H1 (cell line): ENCODE measurements at regions of chr15 and their contacts with region 1.

Region 1: DNA sequence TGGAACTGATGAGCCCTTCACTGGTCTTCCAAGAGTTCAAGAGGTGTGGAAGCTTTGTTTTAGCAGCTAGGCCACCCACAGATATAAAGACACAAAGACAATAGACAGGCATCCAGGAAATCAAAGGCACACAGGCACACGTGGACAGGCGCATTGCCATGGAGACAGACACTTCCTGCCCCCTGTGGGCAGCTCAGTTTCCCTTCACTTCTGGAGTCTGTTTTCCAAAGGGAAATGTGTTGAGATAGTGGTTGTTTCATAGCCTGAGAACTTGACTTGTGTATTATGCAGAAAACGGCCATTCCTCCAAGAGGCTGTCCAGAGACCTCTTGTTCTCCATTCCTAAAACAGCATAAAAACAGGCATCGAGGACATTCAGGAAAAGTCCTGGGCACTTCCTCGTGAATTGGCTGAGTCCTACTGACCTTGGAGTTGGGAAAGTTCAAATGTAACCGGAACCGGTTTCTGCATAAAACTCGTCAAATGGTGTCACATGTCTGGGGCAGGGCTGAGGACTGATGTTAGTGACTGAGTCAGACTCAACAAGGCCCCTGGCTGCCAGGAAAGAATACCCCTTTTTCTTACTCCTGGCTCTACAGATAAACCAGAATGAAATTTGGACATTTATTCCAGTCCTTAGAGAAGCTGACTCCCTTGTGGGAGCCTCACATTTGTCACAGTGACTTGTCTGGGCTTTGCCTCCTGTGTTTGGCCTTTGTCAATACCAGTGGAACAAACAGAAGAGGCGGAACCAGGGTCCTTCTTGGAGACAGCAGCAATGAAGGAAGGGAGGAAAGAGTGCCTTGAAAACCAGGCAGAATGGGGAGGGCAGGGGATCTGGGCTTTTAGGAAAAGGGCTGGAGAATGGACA is 1.3 kb downstream of the ALPK3 start:
- DNase-seq: no peak
- H3K4me3 ChIP-seq: peak overlapping the region in 3 of 4 experiments; percentile 18 to 53 (median 36); a peak in 2 of 8 replicates
- H3K27ac ChIP-seq: no peak overlapping the region
- H3K4me1 ChIP-seq: peaks cover 9 to 25% (median 18%) of the 10 kb centered on the region in 4 experiments
- H3K27me3 ChIP-seq: peaks cover 0 to 3% (median 0%) of the 10 kb centered on the region in 4 experiments; a peak in 2 of 7 replicates
- CTCF ChIP-seq: peak in 2 of 3 experiments; percentile 2 to 5; a peak in 1 of 4 replicates
- EP300 ChIP-seq: no peak
- POLR2A ChIP-seq: no peak; a peak in 1 of 3 replicates
- RAD21 ChIP-seq: no peak

Region 2: DNA sequence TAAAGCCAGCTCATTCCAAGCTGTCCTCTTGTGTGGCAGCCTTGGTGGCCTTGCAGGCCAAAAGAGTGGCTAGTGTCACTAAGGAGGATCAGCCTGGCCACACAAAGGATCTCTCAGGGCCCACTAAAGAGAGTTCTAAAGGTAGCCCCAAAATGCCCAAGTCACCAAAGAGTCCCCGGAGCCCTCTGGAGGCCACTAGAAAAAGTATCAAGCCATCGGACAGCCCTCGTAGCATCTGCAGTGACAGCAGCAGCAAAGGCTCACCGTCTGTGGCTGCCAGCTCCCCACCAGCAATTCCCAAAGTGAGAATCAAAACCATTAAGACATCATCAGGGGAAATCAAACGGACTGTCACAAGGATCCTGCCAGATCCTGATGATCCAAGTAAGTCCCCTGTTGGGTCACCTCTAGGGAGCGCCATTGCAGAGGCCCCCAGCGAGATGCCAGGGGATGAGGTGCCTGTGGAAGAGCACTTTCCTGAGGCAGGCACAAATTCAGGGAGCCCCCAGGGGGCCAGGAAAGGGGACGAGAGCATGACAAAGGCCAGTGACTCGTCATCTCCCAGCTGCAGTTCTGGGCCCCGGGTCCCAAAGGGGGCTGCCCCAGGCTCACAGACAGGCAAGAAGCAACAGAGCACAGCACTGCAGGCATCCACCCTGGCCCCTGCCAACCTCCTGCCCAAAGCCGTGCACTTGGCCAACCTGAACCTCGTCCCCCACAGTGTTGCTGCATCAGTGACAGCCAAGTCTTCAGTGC is 34.8 kb before region 1 on chr15:
- CTCF ChIA-PET with region 1: interaction called, 11 read pairs
- POLR2A ChIA-PET with region 1: interaction called, 3 read pairs
- DNase-seq: peak; percentile 21 to 72
- H3K4me3 ChIP-seq: no peak overlapping the region
- H3K27ac ChIP-seq: no peak overlapping the region
- H3K4me1 ChIP-seq: peaks cover 0 to 8% (median 4%) of the 10 kb centered on the region in 4 experiments; a peak in 4 of 7 replicates
- H3K27me3 ChIP-seq: no peaks in the 10 kb centered on the region
- CTCF ChIP-seq: peak; percentile 36 to 54 (median 50)
- EP300 ChIP-seq: no peak
- POLR2A ChIP-seq: no peak
- RAD21 ChIP-seq: peak; percentile 42

Region 3: GRCh38 chr15:84789762-84790161 is 28.7 kb before region 1 on chr15:
- CTCF ChIA-PET with region 1: interaction called, 11 read pairs
- POLR2A ChIA-PET with region 1: interaction called, 3 read pairs
- DNase-seq: no peak
- H3K4me3 ChIP-seq: no peak overlapping the region
- H3K27ac ChIP-seq: no peak overlapping the region
- H3K4me1 ChIP-seq: 0 out of 7 replicates have a peak, but pooled peaks cover 0 to 2% (median 0%) of the 10 kb centered on the region in 4 experiments
- H3K27me3 ChIP-seq: no peaks in the 10 kb centered on the region
- CTCF ChIP-seq: no peak
- EP300 ChIP-seq: no peak
- POLR2A ChIP-seq: no peak
- RAD21 ChIP-seq: no peak

Region 4: DNA sequence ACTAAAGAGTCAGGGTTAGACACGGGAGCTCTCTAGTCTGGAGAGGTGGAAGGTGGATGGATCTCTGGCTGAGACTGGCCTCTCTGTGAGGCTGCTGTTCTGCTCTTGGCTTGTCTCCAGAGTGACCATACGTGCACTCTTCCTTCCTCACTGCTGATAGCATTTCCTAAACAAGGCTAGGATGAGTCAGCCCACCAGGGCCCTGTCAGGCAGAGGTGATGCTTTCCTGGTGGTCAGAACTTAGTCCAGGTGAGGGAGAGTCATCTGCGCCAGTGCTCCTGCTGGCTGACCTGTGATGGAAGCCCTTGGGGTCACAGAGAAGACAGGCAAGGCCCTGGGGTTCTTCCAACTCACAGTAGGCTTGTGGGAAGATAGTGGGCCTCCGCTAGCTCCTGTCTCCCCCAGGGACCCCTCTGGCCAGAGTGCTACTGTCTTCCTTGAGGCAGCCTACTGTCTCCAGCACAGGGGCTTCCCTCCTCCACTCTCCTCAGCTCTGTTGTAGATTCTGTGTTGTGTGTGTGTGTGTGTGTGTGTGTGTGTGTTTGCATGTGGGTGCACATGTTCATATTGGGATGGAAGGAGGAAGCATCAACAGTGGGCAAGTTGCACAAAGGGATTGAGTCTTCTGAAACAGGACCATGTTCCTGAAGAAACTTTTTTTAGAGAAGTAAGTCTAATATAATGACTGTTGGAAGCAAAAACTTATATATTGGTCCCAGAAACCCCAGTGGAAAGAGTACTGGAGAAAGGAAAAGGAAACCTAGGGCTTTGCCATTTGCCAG is 15.1 kb after region 1 on chr15:
- CTCF ChIA-PET with region 1: interaction called, 40 read pairs
- POLR2A ChIA-PET with region 1: interaction called, 5 read pairs
- DNase-seq: no peak
- H3K4me3 ChIP-seq: no peak overlapping the region
- H3K27ac ChIP-seq: no peak overlapping the region
- H3K4me1 ChIP-seq: no peaks in the 10 kb centered on the region
- H3K27me3 ChIP-seq: no peaks in the 10 kb centered on the region
- CTCF ChIP-seq: no peak
- EP300 ChIP-seq: no peak
- POLR2A ChIP-seq: no peak
- RAD21 ChIP-seq: no peak

Region 5: DNA sequence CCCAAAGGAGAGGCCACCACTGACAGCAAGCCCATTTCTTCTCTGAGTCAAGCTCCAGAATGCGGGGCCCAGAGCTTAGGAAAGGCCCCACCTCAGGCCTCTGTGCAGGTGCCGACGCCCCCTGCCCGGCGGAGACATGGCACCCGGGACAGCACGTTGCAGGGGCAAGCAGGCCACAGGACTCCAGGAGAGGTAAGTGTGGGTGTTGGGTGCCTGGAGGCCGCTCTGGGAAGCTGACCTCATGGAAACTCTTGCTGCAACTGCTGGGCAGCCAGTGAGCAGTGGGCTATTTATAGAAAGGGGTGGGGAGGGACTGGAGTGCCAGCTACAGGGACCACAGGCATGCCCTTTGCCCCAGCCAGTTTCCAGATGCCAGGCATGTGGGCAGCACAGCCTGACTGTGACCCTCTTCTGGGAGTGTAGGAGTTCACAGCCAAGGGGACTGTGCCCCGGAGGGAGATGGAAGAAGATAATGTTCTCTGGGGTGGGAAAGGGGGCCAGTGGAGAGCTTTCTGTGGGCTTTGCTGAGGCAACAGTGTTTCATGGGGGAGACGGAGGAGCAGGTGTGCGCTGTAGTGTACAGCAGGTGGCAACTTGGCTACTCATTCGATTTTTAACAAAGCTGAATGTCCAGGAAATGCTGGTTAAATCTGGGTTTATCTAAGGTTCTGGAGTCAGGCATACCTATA is 22.4 kb after region 1 on chr15:
- CTCF ChIA-PET with region 1: interaction called, 11 read pairs
- POLR2A ChIA-PET with region 1: interaction called, 6 read pairs
- DNase-seq: no peak
- H3K4me3 ChIP-seq: no peak overlapping the region
- H3K27ac ChIP-seq: no peak overlapping the region
- H3K4me1 ChIP-seq: no peaks in the 10 kb centered on the region
- H3K27me3 ChIP-seq: no peaks in the 10 kb centered on the region
- CTCF ChIP-seq: no peak
- EP300 ChIP-seq: no peak
- POLR2A ChIP-seq: no peak
- RAD21 ChIP-seq: no peak

Region 6: GRCh38 chr15:84871428-84872305 is 53.2 kb after region 1 on chr15:
- CTCF ChIA-PET with region 1: interaction called, 16 read pairs
- POLR2A ChIA-PET with region 1: no interaction called
- DNase-seq: no peak
- H3K4me3 ChIP-seq: no peak overlapping the region
- H3K27ac ChIP-seq: no peak overlapping the region
- H3K4me1 ChIP-seq: no peaks in the 10 kb centered on the region
- H3K27me3 ChIP-seq: no peaks in the 10 kb centered on the region
- CTCF ChIP-seq: peak; percentile 30 to 40 (median 40)
- EP300 ChIP-seq: no peak
- POLR2A ChIP-seq: no peak
- RAD21 ChIP-seq: peak; percentile 34 to 48

Region 7: DNA sequence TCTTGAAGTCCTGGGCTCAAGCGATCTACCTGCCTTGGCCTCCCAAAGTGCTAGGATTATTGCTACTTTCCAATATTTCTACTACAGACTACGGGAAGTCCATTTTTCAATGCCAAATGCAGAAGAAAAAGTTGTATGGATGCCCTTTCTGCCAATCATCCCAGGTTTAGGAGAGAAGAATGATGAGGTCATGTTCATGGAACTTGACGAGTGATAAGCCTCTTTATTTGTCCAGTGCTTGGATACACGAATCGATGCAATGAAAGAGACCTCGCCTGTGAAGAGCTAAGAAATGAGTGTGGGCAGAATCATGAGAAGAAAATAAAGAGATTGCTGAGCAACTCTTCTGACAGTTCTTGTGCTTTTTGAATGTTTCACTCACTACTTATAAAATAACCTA is 64.9 kb after region 1 on chr15:
- CTCF ChIA-PET with region 1: interaction called, 16 read pairs
- POLR2A ChIA-PET with region 1: no interaction called
- DNase-seq: no peak
- H3K4me3 ChIP-seq: no peak overlapping the region
- H3K27ac ChIP-seq: no peak overlapping the region
- H3K4me1 ChIP-seq: no peaks in the 10 kb centered on the region; a peak in 1 of 7 replicates
- H3K27me3 ChIP-seq: no peaks in the 10 kb centered on the region
- CTCF ChIP-seq: no peak
- EP300 ChIP-seq: no peak
- POLR2A ChIP-seq: no peak
- RAD21 ChIP-seq: no peak